Mammary epithelial cell (primary cell): ENCODE measurements at regions of chr14 and their contacts with region 1.

Region 1: GRCh38 chr14:69850086-69850735 is 29.0 kb upstream of the SMOC1 start:
- DNase-seq: no peak
- H3K4me3 ChIP-seq: no peak overlapping the region
- H3K27ac ChIP-seq: no peak overlapping the region
- H3K4me1 ChIP-seq: no peaks in the 10 kb centered on the region
- H3K27me3 ChIP-seq: no peaks in the 10 kb centered on the region
- CTCF ChIP-seq: no peak

Region 2: GRCh38 chr14:69896080-69896479 is 45.9 kb after region 1 on chr14:
- CTCF ChIA-PET with region 1: no interaction called
- dilution Hi-C with region 1: loop called (anchors 5 kb)
- in situ Hi-C with region 1: no loop called
- intact Hi-C with region 1: no loop called
- DNase-seq: no peak
- H3K4me3 ChIP-seq: no peak overlapping the region
- H3K27ac ChIP-seq: no peak overlapping the region
- H3K4me1 ChIP-seq: peaks cover 12% of the 10 kb centered on the region
- H3K27me3 ChIP-seq: no peaks in the 10 kb centered on the region
- CTCF ChIP-seq: no peak

Region 3: GRCh38 chr14:70350078-70350477 is 499.9 kb after region 1 on chr14:
- CTCF ChIA-PET with region 1: no interaction called
- dilution Hi-C with region 1: no loop called
- in situ Hi-C with region 1: no loop called
- intact Hi-C with region 1: no loop called
- DNase-seq: no peak
- H3K4me3 ChIP-seq: no peak overlapping the region
- H3K27ac ChIP-seq: no peak overlapping the region
- H3K4me1 ChIP-seq: no peaks in the 10 kb centered on the region
- H3K27me3 ChIP-seq: no peaks in the 10 kb centered on the region
- CTCF ChIP-seq: no peak